Right ventricle myocardium inferior (tissue), 1 donor: ENCODE measurements at regions of chr1 and their contacts with region 1.

Region 1: DNA sequence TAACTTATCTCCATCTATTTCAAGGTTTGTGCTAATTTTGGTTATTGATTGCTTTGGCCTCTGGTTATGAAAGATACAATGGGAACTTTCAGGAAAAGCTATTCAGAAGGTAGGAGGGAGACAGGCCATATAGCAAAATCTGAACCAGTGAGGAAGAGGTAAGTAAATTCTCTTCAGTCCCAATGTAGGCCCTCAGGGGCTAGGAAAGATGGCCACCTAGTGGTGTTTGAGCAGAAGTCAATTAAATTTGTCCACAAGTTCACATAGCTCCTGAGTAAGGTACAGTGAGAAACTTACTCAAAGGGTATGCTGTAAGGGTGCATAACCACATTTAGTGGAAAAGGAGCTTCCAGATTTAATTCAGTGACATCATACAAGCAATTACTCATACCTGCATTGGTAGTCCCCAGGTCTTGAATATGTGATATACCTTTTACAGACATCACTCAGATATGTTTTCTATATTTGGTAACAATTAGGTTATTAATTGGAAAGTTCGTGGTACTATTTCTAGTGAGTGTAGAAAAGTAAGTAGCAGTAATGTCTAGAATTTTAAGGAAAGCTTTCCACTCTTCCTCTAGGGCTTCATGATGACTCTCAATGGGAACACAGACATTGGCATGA is 21.4 kb upstream of the FMO1 start:
- DNase-seq: no peak
- ATAC-seq: peak; percentile 68

Region 2: GRCh38 chr1:170967042-170967910 is 259.6 kb before region 1 on chr1:
- intact Hi-C with region 1: loop called (anchors 2 kb)
- DNase-seq: no peak
- ATAC-seq: peak; percentile 54

Region 3: GRCh38 chr1:171081314-171081753 is 145.5 kb before region 1 on chr1:
- intact Hi-C with region 1: loop called (anchors 1 kb)
- DNase-seq: no peak
- ATAC-seq: peak; percentile 55

Region 4: DNA sequence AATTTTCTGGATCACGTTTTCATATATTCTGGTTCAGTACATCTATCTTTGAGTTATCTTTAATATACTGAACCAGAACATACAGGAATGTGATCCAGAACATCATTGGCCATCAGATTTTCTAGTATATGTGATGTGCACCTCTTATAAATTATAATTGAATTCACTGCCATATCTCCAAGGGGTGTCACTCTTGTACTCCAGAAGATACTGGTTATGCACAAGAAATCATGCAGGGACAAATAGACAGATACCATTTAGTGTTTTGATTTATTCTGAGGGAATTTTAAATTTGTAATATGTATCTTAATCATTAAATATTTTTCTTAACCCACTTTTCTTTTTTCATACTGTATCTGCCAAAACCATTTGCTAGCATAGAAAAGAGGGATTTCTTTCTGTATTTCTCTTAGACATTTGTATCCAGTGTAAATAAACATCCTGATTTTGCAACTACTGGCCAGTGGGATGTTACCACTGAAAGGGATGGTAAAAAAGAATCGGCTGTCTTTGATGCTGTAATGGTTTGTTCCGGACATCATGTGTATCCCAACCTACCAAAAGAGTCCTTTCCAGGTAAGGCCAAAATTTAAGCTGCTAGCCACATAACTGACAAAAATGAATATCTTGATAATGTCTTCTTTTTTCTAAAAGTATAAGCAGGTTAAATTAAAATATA is 119.5 kb before region 1 on chr1:
- intact Hi-C with region 1: loop called (anchors 5 kb)
- DNase-seq: no peak
- ATAC-seq: peak; percentile 49

Region 5: DNA sequence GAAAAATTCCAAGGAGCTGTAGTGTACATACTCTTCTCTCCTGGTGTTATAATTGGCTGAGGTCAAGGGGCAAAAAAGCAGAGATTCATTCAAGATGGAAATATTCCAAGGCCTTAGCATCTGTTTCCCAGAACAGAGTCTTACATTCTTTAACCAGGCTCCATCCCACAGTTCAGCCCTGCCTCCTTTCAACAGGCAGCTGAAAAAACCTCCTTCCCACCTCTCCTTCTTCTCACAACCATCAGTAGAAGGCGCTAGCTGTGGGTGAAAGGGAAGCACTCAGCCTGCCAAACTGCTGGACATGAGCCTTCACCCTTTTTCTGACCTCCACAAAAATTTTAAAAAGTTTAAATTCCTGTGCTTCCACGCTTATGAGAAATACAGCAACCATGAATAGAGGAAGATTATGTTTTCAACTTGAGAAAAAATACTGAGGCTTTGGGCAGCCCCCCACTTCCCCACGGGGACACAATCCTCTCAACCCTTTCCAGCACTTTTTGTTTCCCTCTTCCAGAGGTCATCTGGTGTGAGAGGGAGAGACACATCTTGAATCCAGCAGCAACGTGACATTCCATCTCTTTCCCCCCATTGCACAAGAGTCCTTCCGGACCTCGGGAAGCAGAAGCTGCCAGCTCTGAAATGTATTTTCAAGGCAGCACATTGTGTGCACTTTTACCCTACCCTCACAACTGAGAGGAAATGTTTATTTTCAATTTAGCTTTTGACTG is 85.0 kb before region 1 on chr1:
- intact Hi-C with region 1: loop called (anchors 1 kb)
- DNase-seq: peak; percentile 64
- ATAC-seq: peak; percentile 78

Region 6: GRCh38 chr1:171188388-171189266 is 38.2 kb before region 1 on chr1:
- intact Hi-C with region 1: loop called (anchors 5 kb)
- DNase-seq: no peak
- ATAC-seq: peak; percentile 64